Activated naive CD4-positive, alpha-beta T cell treated with anti-CD3 and anti-CD28 coated beads for 36 hours (primary cell): ENCODE measurements at regions of chr1 and their contacts with region 1.

Region 1: GRCh38 chr1:25148673-25149300 is 83.5 kb downstream of the SYF2 start:
- DNase-seq: peak; percentile 60
- H3K4me3 Mint-ChIP-seq: no peak overlapping the region
- H3K27ac Mint-ChIP-seq: no peak overlapping the region
- H3K4me1 Mint-ChIP-seq: no peaks in the 10 kb centered on the region
- H3K27me3 Mint-ChIP-seq: peaks cover 3% of the 10 kb centered on the region

Region 2: DNA sequence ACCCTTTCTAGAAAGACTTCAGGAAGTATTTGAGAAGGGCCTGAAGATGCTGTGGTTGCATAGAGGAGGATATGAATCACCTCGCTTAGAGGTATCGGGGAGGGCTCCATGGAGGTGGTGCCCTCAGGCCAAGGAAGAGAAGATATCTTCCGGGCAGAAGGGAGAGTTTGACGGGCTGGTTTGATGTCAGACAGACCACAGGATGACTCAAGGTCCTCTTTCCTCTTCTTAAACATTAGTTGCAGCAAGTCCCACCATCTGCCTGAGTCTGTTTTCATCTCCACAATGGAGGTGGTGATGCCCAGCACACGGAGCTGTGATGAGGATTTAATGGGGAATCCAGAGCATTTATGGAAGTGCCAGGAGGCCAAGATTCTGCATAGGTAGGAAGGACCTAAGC is 193.6 kb before region 1 on chr1:
- CTCF ChIA-PET with region 1: no interaction called
- intact Hi-C with region 1: no loop called
- DNase-seq: peak; percentile 94
- H3K4me3 Mint-ChIP-seq: peak overlapping the region; percentile 89
- H3K27ac Mint-ChIP-seq: peak overlapping the region; percentile 95
- H3K4me1 Mint-ChIP-seq: peaks cover 85% of the 10 kb centered on the region
- H3K27me3 Mint-ChIP-seq: no peaks in the 10 kb centered on the region

Region 3: DNA sequence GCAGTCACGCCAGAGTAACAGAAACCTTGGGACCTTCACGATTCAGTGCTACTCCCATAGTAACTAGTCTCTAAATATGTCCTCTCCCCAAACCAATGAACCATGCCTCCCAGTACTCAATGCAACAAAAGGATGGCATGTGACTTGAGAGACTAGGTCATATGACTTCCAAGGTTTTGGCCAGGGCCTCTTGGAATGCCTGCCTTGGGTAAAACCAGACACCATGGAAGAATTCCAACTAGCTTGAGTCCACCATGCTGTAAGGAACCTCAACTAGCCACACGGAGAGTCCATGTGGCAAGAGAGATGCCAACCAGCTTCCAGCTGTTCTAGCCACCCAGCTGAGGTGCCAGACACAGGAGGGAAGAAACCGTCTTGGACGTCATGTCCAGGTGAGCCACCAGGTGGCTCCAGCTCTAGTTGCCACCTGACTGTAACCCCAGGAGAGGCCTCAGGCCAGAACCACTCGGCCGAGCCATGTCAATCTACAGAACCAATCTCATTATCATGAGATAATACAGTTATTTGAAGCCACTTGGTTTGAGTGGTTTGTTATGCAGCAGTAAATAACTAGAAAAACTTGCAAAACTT is 31.5 kb before region 1 on chr1:
- CTCF ChIA-PET with region 1: interaction called, 5 read pairs
- intact Hi-C with region 1: loop called (anchors 1 kb)
- DNase-seq: peak; percentile 46
- H3K4me3 Mint-ChIP-seq: no peak overlapping the region
- H3K27ac Mint-ChIP-seq: no peak overlapping the region
- H3K4me1 Mint-ChIP-seq: peaks cover 32% of the 10 kb centered on the region
- H3K27me3 Mint-ChIP-seq: no peaks in the 10 kb centered on the region

Region 4: GRCh38 chr1:25754470-25755181 is 605.8 kb after region 1 on chr1:
- CTCF ChIA-PET with region 1: no interaction called
- intact Hi-C with region 1: no loop called
- DNase-seq: peak; percentile 70
- H3K4me3 Mint-ChIP-seq: peak overlapping the region; percentile 20
- H3K27ac Mint-ChIP-seq: peak overlapping the region; percentile 76
- H3K4me1 Mint-ChIP-seq: peaks cover 43% of the 10 kb centered on the region
- H3K27me3 Mint-ChIP-seq: no peaks in the 10 kb centered on the region